ENCODE measurements at regions of chr2 and their contacts with region 1.

Region 1: GRCh38 chr2:20446917-20447436 is at the start of gene RHOB:
- DNase-seq: peak; percentile 100
- CTCF ChIP-seq: no peak

Region 2: DNA sequence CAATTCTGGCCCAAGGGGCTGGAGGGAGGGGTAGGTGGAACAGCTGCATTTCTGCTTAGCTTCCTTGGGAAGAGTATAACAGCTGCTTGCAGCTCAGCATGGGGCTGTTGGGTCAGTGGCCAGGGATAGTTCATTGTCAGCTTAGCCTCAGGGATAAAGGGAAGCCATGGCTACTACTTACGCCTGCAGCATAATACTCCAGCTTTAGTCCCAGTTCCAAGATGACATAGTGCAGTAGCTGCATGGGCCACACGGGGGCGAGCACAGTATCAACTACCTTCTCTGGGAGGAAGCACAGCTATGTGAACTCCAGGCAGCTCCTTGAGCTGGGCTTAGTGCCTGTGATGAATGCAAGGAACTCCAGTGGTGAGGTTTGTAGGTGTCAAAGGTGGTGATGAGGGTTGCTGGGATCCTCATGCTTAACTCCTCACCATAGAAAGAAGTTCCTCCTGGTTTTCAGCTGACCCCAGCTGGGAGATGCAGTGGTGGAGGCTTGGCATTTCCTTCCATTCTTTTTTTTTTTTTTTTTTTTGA is 35.5 kb before region 1 on chr2:
- CTCF ChIA-PET with region 1: interaction called, 45 read pairs
- POLR2A ChIA-PET with region 1: interaction called, 27 read pairs
- DNase-seq: peak; percentile 82
- CTCF ChIP-seq: peak; percentile 86

Region 3: DNA sequence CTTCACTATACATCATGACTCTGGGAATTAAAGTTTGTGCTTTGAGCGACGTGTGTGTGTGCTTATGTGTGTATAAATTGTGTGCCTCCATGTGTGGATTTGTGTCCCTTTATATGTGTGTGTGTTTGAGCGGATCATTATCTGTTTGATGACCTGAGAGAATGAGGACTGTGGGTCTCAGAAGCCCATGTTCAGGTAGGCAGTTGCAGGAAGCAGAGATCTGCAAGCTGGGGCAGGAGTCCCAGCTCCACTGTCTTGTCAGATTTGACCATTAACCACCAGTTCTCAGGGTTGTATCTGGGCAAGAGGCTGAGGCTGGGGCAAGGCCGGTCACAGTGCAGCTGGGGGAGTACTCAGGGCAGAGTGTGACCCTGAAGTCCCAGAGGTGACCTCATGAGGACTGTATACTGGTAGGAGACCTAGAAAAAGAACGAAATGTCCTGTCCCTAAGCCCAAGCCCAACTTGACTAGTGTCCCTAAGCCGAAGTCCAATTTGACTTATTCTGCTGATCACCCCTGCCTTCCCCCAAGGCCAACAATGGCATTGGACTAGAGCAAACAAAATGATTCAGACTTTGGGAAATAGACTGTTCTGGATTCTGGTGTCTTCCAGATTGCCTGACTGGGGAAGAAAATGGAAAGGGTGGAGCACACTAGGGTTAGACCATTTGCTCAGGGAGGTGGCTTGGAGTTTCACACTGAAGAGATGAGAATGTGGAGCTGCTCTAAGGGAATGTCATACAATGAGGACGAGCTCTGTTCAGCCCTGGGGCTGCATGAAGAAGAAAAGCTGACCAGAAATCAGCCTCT is 28.0 kb after region 1 on chr2:
- CTCF ChIA-PET with region 1: no interaction called
- POLR2A ChIA-PET with region 1: interaction called, 16 read pairs
- DNase-seq: no peak
- CTCF ChIP-seq: no peak

Region 4: DNA sequence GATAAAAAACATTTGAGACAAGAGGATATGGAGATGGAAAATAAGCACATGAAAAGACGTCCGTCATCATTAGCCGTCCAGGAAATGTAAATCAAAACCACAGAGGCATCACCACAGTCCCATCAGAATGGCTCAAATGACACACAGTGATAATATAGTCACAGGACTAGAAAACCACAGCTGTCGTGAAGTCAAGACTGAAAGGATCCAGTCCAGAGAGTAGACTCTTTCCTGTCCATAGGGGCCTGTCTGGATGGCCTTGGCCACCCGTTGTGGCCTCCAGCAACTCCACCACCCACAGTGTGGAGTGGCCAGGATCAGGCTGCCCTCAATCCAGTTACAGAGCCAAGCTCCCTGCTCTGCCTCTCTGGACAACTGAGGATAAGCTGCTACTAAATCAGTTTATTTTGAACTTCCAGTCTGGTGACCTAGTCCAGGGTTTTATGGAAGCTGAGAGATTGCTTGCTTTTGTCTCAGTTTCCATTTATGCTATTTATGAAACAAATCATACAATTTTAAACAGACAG is 60.3 kb after region 1 on chr2:
- CTCF ChIA-PET with region 1: no interaction called
- POLR2A ChIA-PET with region 1: interaction called, 12 read pairs
- DNase-seq: peak; percentile 65
- CTCF ChIP-seq: no peak

Region 5: GRCh38 chr2:20568501-20569463 is 121.8 kb after region 1 on chr2:
- CTCF ChIA-PET with region 1: no interaction called
- POLR2A ChIA-PET with region 1: interaction called, 30 read pairs
- DNase-seq: no peak
- CTCF ChIP-seq: no peak

Region 6: DNA sequence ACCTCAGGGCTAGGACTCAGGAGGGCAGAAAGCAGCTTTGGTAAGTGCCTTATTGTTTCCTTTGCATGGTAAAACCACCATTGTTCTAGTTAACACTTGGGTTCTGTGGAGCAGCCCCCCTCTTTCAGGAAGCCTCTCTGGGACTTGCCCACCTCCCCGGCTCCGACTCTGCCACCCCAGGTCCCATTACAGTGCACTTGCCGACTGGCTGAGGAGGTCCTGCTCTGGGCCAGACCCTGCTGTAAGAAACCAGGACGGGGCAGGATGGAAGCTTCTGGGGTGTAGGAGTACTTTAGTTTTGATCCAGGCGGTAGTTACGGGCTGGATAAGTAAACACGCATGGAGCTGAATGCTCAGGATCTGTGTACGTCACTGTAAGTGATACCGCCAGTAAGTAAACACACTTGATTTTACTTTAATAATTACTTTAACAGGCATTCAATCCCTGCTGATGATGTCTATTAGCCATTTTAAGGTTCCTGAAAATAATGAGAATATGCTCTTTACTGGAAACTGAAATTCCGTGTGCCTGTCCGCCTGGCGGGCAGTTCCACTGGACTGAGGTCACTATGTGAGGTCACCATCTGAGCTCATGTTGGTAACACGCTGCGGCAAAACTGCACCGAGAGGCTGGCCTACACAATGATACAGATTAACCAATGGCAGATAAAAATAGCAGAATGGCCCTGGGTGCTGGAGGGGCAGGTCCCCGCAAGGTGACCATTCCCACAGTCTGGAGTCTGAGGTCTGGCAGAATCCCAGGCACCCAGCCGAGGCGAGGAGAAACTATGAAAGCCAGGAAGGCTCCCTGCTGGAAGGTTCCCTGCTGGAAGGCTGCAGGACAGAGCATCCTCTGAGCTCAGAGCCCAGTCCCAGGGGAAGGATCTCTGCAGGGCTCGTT is 178.8 kb after region 1 on chr2:
- CTCF ChIA-PET with region 1: interaction called, 17 read pairs
- POLR2A ChIA-PET with region 1: interaction called, 22 read pairs
- DNase-seq: no peak
- CTCF ChIP-seq: no peak

Region 7: GRCh38 chr2:20661067-20661980 is 214.3 kb after region 1 on chr2:
- CTCF ChIA-PET with region 1: interaction called, 10 read pairs
- POLR2A ChIA-PET with region 1: interaction called, 14 read pairs
- DNase-seq: peak; percentile 80
- CTCF ChIP-seq: peak; percentile 94